CD4-positive, alpha-beta T cell (primary cell): ENCODE measurements at regions of chr20 and their contacts with region 1.

Region 1: DNA sequence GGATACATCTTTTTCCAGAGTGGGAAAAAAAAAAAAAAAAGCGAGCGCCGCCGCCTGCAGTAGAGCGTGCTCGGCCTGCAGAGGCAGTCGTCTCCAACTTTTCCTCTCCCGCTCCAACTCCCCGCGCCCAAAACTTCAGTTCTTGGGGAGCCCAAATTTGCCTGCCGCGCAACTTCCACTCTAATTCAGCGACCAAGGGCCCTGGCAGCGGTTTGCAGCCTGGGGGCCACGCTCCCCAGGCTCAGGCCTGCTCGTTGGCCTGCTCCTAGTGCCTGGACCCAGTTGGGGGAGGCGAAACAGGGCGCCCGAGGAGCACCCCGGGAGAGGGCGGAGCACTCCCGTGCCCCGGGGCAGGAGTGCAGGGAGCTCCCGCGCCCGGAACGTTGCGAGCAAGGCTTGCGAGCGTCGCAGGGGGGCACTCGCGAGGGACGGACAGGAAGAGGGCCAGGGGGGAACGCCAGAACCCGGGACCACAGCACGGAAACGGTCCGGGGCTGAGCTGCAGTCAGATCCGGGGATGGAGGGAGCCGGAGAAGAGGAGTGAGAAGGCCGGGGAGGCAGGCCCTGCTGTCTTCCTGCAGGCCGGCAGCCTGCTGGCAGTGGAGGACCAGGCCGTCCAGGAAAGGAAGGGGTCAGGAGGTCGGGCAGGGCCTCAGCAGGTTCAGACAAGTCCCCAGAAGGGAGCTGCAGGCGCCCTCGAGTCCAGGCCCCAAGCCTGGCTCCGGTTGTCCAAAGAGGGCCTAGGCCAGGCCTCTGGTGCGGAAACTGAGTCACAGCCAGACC is at the start of gene STX16:
- DNase-seq: peak; percentile 76 to 95 (median 86)
- ATAC-seq: peak; percentile 66
- H3K4me3 ChIP-seq: peak within 1 kb of the TSS; percentile 74
- H3K4me3 Mint-ChIP-seq: peak within 1 kb of the TSS; percentile 99
- H3K27ac ChIP-seq: peak within 1 kb of the TSS; percentile 91 to 93
- H3K27ac Mint-ChIP-seq: peak within 1 kb of the TSS; percentile 100
- H3K4me1 ChIP-seq: peaks cover 37% of the 10 kb centered on the region
- H3K4me1 Mint-ChIP-seq: peaks cover 28% of the 10 kb centered on the region
- H3K27me3 ChIP-seq: no peaks in the 10 kb centered on the region
- H3K27me3 Mint-ChIP-seq: no peaks in the 10 kb centered on the region
- CTCF ChIP-seq: peak; percentile 76
- total RNA-seq, gene STX16: 179 to 181 TPM

Region 2: GRCh38 chr20:57622579-57623377 is 1028.2 kb before region 1 on chr20:
- CTCF ChIA-PET with region 1: no interaction called
- POLR2A ChIA-PET with region 1: interaction called, 5 read pairs
- intact Hi-C with region 1: loop called in 1 of 2 experiments (anchors 10 kb)
- DNase-seq: peak; percentile 65 to 85 (median 74)
- ATAC-seq: peak; percentile 53
- H3K4me3 ChIP-seq: no peak overlapping the region
- H3K4me3 Mint-ChIP-seq: peak overlapping the region; percentile 87
- H3K27ac ChIP-seq: no peak overlapping the region
- H3K27ac Mint-ChIP-seq: peak overlapping the region; percentile 84
- H3K4me1 ChIP-seq: peaks cover 71% of the 10 kb centered on the region
- H3K4me1 Mint-ChIP-seq: peaks cover 88% of the 10 kb centered on the region
- H3K27me3 ChIP-seq: no peaks in the 10 kb centered on the region
- H3K27me3 Mint-ChIP-seq: no peaks in the 10 kb centered on the region
- CTCF ChIP-seq: peak; percentile 73

Region 3: DNA sequence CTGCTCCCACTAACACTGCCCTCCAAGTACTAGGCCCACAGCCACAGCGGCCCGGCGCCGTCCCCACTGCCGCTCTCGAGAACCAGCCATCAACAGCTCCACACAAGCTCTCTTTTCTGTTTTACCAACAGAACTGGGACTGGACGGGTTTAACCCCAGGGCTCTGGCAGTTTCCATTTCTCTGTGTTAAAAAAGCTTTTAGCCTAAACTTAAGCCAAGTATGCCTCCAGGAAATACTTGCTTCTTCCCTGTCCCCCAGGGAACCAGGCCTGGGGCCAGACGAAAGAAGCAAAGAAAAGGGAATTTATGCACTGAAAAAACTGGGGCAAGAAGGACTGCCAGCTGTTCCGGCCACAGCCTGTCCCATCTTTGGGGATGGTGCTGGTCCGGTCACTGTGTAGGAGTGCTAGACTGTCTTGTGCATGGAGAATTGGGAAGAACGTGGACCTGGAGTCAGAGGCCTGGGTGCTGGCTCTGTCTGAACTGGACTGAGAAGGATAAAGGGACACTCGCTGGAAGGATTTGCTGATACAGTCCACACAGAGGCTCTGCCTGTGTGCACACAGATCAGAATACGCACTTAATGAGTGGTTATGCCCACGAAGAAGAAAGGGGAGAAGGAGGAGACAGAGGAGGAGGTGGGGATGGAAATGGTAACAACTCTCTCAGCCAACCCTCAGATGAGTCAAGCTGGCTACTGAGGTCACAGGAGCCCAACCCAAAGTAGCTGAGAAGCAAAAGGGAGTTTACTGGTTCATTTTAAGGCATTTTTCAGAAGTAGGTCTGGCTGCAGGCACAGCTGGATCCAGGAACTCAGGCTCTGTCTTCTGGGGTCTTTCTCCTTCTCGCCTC is 686.7 kb before region 1 on chr20:
- CTCF ChIA-PET with region 1: no interaction called
- POLR2A ChIA-PET with region 1: no interaction called
- intact Hi-C with region 1: no loop called
- DNase-seq: no peak
- ATAC-seq: no peak
- H3K4me3 ChIP-seq: no peak overlapping the region
- H3K4me3 Mint-ChIP-seq: no peak overlapping the region
- H3K27ac ChIP-seq: no peak overlapping the region
- H3K27ac Mint-ChIP-seq: no peak overlapping the region
- H3K4me1 ChIP-seq: no peaks in the 10 kb centered on the region
- H3K4me1 Mint-ChIP-seq: no peaks in the 10 kb centered on the region
- H3K27me3 ChIP-seq: no peaks in the 10 kb centered on the region
- H3K27me3 Mint-ChIP-seq: peaks cover 18% of the 10 kb centered on the region
- CTCF ChIP-seq: no peak

Region 4: GRCh38 chr20:58309575-58310290 is 341.2 kb before region 1 on chr20 and contains the start of gene RAB22A:
- CTCF ChIA-PET with region 1: interaction called, 4 read pairs
- POLR2A ChIA-PET with region 1: interaction called, 21 read pairs
- intact Hi-C with region 1: loop called (anchors 1 to 2 kb)
- DNase-seq: peak; percentile 62 to 95 (median 80)
- ATAC-seq: peak; percentile 34
- H3K4me3 ChIP-seq: peak within 1 kb of the TSS; percentile 77
- H3K4me3 Mint-ChIP-seq: peak within 1 kb of the TSS; percentile 97
- H3K27ac ChIP-seq: peak within 1 kb of the TSS; percentile 88 to 89
- H3K27ac Mint-ChIP-seq: peak within 1 kb of the TSS; percentile 98
- H3K4me1 ChIP-seq: peaks cover 58% of the 10 kb centered on the region
- H3K4me1 Mint-ChIP-seq: peaks cover 64% of the 10 kb centered on the region
- H3K27me3 ChIP-seq: no peaks in the 10 kb centered on the region
- H3K27me3 Mint-ChIP-seq: no peaks in the 10 kb centered on the region
- CTCF ChIP-seq: no peak
- total RNA-seq, gene RAB22A: 16.5 to 17.2 TPM

Region 5: DNA sequence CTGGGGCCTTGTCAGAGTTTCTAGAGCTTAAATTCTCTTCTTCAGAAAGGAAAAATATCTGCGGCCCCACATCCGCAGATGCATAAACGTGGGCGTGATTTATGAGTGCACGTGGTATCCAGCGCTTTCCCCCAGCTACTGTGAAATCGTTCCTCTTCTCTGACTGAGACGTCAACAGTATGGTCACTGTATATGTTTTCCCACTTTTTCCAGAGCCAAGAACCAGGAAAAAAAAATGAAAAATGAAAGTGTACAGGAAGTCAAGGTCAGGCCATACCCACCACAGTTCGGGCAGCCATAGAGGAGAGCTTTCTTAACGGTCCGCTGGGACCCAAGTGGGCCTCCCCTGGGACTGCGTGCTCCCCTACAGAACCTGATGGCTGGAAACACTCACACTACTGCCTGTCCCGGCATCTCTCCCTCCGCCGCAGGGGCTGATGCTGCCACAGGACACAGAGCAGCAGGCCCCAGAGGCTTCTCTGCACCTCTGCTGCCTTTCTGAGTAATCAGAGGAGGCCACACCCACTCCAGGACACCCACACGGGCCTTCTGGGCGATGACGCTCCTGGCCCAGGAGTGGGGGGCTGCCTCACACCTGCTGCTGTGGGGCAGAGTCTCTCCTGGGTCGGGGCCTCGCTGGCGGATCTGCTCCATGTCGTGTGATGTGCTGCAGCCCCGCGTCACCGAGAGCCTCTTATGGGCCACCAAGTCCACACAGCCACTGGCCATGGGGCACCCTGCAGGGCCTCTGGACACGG is 16.3 kb before region 1 on chr20:
- CTCF ChIA-PET with region 1: no interaction called
- POLR2A ChIA-PET with region 1: interaction called, 18 read pairs
- intact Hi-C with region 1: no loop called
- DNase-seq: peak in 7 of 14 experiments; percentile 7 to 56 (median 13)
- ATAC-seq: peak; percentile 82
- H3K4me3 ChIP-seq: no peak overlapping the region
- H3K4me3 Mint-ChIP-seq: peak overlapping the region; percentile 39
- H3K27ac ChIP-seq: no peak overlapping the region
- H3K27ac Mint-ChIP-seq: peak overlapping the region; percentile 60
- H3K4me1 ChIP-seq: peaks cover 28% of the 10 kb centered on the region
- H3K4me1 Mint-ChIP-seq: peaks cover 20% of the 10 kb centered on the region
- H3K27me3 ChIP-seq: no peaks in the 10 kb centered on the region
- H3K27me3 Mint-ChIP-seq: peaks cover 4% of the 10 kb centered on the region
- CTCF ChIP-seq: no peak

Region 6: GRCh38 chr20:58850693-58851174 is 199.8 kb after region 1 on chr20 and contains the start of gene GNAS-AS1:
- CTCF ChIA-PET with region 1: interaction called, 9 read pairs
- POLR2A ChIA-PET with region 1: interaction called, 22 read pairs
- intact Hi-C with region 1: loop called (anchors 5 kb)
- DNase-seq: peak; percentile 62 to 85 (median 76)
- ATAC-seq: peak; percentile 88
- H3K4me3 ChIP-seq: peak within 1 kb of the TSS; percentile 56
- H3K4me3 Mint-ChIP-seq: peak within 1 kb of the TSS; percentile 94
- H3K27ac ChIP-seq: no peak within 1 kb of the TSS
- H3K27ac Mint-ChIP-seq: no peak within 1 kb of the TSS
- H3K4me1 ChIP-seq: peaks cover 47% of the 10 kb centered on the region
- H3K4me1 Mint-ChIP-seq: peaks cover 22% of the 10 kb centered on the region
- H3K27me3 ChIP-seq: peaks cover 48 to 50% of the 10 kb centered on the region in 2 experiments
- H3K27me3 Mint-ChIP-seq: peaks cover 60% of the 10 kb centered on the region
- CTCF ChIP-seq: no peak
- total RNA-seq, gene GNAS-AS1: not detected

Region 7: GRCh38 chr20:59042796-59043660 is 392.1 kb after region 1 on chr20:
- CTCF ChIA-PET with region 1: no interaction called
- POLR2A ChIA-PET with region 1: interaction called, 6 read pairs
- intact Hi-C with region 1: loop called (anchors 5 kb)
- DNase-seq: peak; percentile 87 to 97 (median 94)
- ATAC-seq: peak; percentile 94
- H3K4me3 ChIP-seq: peak overlapping the region; percentile 85
- H3K4me3 Mint-ChIP-seq: peak overlapping the region; percentile 92
- H3K27ac ChIP-seq: peak overlapping the region; percentile 67 to 77
- H3K27ac Mint-ChIP-seq: peak overlapping the region; percentile 91
- H3K4me1 ChIP-seq: peaks cover 41% of the 10 kb centered on the region
- H3K4me1 Mint-ChIP-seq: peaks cover 48% of the 10 kb centered on the region
- H3K27me3 ChIP-seq: no peaks in the 10 kb centered on the region
- H3K27me3 Mint-ChIP-seq: no peaks in the 10 kb centered on the region
- CTCF ChIP-seq: no peak

Region 8: DNA sequence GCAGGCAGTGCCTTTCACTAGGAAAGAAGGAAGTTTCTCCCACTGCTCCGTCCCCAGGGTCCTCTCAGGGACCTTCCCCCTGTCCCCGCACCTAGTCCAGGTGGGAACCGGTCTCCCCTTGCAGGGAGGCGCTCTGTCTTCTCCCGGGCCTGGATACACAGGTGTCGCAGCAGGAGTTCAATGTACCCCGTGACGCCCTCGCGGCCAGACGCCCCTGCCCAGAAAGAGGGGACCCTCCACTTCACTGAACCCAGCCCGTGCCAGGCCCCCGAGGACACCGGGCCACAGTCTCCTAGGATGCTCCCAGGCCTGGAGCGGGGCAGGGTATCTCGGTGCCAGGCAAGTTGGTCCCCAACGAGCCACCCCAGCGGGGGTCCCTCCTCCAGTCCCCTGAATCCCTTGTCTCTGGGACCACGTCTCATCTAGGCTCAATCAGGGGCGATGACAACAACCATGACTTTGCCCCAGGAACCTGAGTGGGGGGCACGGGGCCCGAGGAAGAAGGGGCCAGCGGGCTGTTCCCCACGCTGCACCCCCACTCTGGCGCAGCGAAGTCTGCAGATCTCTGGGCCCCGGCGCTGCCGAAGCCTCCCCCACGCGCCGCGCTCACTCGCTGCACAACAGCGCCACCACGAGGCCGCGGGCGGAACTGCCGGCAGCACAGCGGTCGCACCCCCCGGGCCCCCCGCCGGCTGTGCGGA is 752.4 kb after region 1 on chr20:
- CTCF ChIA-PET with region 1: no interaction called
- POLR2A ChIA-PET with region 1: no interaction called
- intact Hi-C with region 1: loop called (anchors 2 to 10 kb)
- DNase-seq: peak; percentile 52 to 83 (median 72)
- ATAC-seq: peak; percentile 71
- H3K4me3 ChIP-seq: peak overlapping the region; percentile 25
- H3K4me3 Mint-ChIP-seq: peak overlapping the region; percentile 76
- H3K27ac ChIP-seq: no peak overlapping the region
- H3K27ac Mint-ChIP-seq: no peak overlapping the region
- H3K4me1 ChIP-seq: peaks cover 21% of the 10 kb centered on the region
- H3K4me1 Mint-ChIP-seq: no peaks in the 10 kb centered on the region
- H3K27me3 ChIP-seq: peaks cover 27 to 41% of the 10 kb centered on the region in 2 experiments
- H3K27me3 Mint-ChIP-seq: no peaks in the 10 kb centered on the region
- CTCF ChIP-seq: peak; percentile 99